AG04449 (cell line): ENCODE measurements at regions of chr3 and their contacts with region 1.

Region 1: DNA sequence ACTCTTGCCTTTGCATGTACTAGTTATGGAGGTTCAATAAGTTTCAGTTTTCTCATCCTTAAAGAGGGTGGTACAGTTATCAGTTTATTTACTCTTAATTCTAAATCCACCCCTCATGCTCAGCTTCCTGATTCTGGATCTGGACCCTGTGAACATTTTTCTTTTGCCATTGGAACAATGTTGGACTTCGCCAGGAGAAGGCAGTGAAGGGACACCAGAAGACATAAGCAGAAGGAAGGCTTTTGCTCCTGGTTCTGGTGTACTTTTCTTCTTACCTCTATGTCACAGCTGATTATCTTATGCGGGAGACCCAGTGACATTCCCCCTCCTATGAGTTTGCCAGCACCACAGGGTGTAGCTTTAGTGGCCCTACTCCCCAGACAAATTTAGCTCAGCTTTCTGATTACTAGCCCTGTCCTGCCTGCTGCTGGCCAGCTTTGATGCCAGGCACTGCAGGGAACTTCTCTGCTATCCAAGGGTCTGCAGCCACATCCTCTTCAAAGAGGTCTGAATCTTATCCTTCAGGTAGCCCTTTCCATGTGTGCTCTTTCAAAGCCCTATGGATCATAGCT is 466.3 kb upstream of the EPHA3 start:
- DNase-seq: no peak
- H3K4me3 ChIP-seq: no peak overlapping the region
- CTCF ChIP-seq: peak; percentile 16

Region 2: GRCh38 chr3:88713233-88713691 is 72.1 kb after region 1 on chr3:
- CTCF ChIA-PET with region 1: no interaction called
- POLR2A ChIA-PET with region 1: no interaction called
- DNase-seq: peak; percentile 17
- H3K4me3 ChIP-seq: no peak overlapping the region
- CTCF ChIP-seq: no peak

Region 3: DNA sequence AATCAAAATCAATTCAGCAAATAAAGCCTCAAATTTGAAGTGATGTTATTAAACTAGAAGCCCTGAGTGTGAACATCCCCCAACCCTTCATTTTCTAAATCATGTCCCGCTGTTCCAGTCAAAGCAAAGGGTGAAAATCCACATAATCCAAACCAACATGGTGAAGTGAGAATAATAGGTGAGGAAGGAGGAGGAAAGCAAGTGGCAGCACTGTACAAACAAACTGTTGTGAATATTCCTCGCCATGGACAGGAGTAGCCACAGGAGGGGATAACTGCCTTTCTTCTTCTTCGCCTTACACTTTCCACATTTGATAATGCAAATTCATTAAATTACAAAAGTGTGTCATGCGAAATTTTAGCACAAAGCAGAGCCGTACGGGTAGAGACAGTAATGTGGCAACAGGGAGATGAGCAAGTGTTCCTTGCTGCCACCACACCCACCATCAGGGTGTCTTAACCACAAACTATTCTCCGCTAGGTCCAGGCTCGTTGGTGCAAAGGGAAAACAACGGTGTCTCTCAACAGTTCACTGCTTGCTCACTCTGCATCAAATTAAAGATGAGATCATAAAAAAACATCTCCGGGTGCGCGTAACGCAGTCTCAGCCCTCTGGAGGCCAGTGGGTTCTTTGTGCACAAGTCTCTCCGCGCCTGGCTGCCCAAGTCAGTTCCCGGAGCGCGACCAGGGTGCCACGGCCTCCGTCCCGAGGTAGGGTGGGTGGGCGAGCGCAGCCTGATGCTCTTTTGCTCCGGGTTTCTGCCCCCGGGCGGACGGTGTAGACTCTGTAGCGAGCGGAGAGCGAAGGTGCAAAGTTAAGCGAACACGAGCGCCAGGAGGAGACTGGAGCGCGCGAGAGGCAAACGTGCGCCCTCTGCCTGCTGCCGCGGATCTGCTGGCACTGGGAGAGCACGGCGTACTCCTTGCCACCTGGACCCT is 473.1 kb after region 1 on chr3:
- CTCF ChIA-PET with region 1: interaction called, 11 read pairs
- POLR2A ChIA-PET with region 1: no interaction called
- DNase-seq: no peak
- H3K4me3 ChIP-seq: peak overlapping the region; percentile 63
- CTCF ChIP-seq: peak; percentile 88